Activated CD4-positive, alpha-beta T cell treated with anti-CD3 and anti-CD28 coated beads for 36 hours (primary cell): ENCODE measurements at regions of chr12 and their contacts with region 1.

Region 1: DNA sequence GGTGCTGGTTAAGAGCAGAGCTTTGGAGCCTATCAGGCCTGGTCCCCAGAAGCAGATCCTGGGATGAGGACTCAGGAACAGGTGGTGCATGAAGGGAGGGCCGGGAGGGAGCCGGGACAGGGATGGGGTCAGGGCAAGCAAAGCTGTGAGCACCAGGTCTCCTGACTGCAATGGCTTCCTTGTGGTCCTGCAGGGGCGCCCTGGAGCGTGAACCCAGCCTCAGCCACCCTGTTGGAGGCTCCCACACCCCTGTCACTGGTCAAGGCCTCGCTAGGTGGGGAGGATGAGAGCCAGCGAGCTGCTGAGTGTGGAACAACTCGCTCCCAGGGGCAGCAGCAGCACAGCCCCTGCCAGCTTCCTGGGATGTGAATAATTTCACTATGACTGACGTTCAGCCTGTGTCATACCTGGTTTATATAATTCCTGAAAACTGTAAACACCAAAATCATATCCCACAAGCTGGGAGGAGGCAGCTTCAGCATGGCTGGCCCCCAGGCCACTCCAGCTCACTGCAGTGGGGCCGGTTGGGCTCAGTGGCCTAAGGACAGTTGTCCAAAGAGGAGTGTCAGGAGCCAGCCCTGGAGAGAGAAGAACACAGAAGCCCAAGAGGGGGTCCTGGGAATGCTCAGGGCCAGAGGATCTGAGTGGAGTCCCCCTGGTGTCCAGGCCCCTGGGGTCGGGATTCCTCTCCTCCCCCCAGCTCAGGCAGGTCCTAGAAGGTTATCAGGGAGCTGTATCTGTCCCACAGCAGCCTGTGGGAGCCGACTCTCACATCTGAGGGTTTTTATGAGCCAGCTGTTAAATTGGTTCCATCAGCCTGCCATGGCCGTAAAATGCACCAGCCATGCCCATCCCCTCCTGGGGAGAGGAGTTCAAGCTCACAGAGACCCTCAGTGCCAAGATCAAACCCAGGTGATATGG is 272.9 kb downstream of the ADGRD1 start:
- DNase-seq: no peak
- ATAC-seq: no peak
- H3K4me3 Mint-ChIP-seq: no peak overlapping the region
- H3K27ac Mint-ChIP-seq: no peak overlapping the region
- H3K4me1 Mint-ChIP-seq: peaks cover 12% of the 10 kb centered on the region
- H3K27me3 Mint-ChIP-seq: peaks cover 19% of the 10 kb centered on the region

Region 2: DNA sequence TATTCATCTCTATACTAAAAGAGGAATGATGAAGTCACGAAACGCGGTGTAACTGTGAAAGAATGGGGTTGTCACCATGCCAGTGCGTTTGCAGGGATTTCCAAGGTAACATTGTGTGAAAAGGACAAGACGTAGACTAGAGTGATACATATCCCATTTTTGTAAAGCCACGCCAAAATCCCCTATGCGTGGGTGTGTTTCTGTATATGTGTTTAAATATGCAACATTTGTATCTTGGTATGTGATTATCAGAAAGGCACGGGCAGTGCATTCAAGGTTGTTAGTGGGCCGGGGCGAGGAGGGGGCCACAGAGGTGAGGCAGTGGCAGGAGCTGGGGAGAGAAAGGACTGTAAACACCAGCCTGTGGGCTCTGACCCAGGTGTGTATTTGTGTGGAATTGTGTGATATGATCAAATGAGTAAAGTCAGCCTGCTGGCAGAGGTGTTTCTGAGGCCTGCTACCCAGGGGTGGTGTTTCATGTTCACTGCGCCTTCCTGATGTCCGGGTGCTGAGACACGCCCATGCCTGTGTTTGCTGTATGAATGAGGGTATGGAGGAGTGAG is 135.1 kb before region 1 on chr12:
- CTCF ChIA-PET with region 1: no interaction called
- POLR2A ChIA-PET with region 1: no interaction called
- intact Hi-C with region 1: no loop called
- DNase-seq: peak; percentile 79
- ATAC-seq: peak; percentile 69
- H3K4me3 Mint-ChIP-seq: peak overlapping the region; percentile 42
- H3K27ac Mint-ChIP-seq: peak overlapping the region; percentile 86
- H3K4me1 Mint-ChIP-seq: peaks cover 21% of the 10 kb centered on the region
- H3K27me3 Mint-ChIP-seq: peaks cover 3% of the 10 kb centered on the region

Region 3: GRCh38 chr12:131438881-131439280 is 212.3 kb after region 1 on chr12:
- CTCF ChIA-PET with region 1: no interaction called
- POLR2A ChIA-PET with region 1: no interaction called
- intact Hi-C with region 1: loop called (anchors 2 kb)
- DNase-seq: no peak
- ATAC-seq: no peak
- H3K4me3 Mint-ChIP-seq: no peak overlapping the region
- H3K27ac Mint-ChIP-seq: no peak overlapping the region
- H3K4me1 Mint-ChIP-seq: no peaks in the 10 kb centered on the region
- H3K27me3 Mint-ChIP-seq: peaks cover 10% of the 10 kb centered on the region